Activated naive CD4-positive, alpha-beta T cell treated with anti-CD3 and anti-CD28 coated beads for 36 hours (primary cell): ENCODE measurements at regions of chr15 and their contacts with region 1.

Region 1: GRCh38 chr15:99565299-99566156 is at the start of gene MEF2A:
- DNase-seq: peak; percentile 95
- H3K4me3 Mint-ChIP-seq: peak within 1 kb of the TSS; percentile 99
- H3K27ac Mint-ChIP-seq: peak within 1 kb of the TSS; percentile 94
- H3K4me1 Mint-ChIP-seq: peaks cover 24% of the 10 kb centered on the region
- H3K27me3 Mint-ChIP-seq: no peaks in the 10 kb centered on the region
- total RNA-seq, gene MEF2A: 15.3 to 15.5 TPM

Region 2: GRCh38 chr15:99250494-99251435 is 314.8 kb before region 1 on chr15:
- CTCF ChIA-PET with region 1: interaction called, 3 read pairs
- intact Hi-C with region 1: loop called (anchors 1 kb)
- DNase-seq: peak; percentile 99
- H3K4me3 Mint-ChIP-seq: peak overlapping the region; percentile 93
- H3K27ac Mint-ChIP-seq: peak overlapping the region; percentile 87
- H3K4me1 Mint-ChIP-seq: peaks cover 28% of the 10 kb centered on the region
- H3K27me3 Mint-ChIP-seq: no peaks in the 10 kb centered on the region

Region 3: GRCh38 chr15:99442252-99442897 is 123.2 kb before region 1 on chr15:
- CTCF ChIA-PET with region 1: no interaction called
- intact Hi-C with region 1: loop called (anchors 5 kb)
- DNase-seq: no peak
- H3K4me3 Mint-ChIP-seq: no peak overlapping the region
- H3K27ac Mint-ChIP-seq: no peak overlapping the region
- H3K4me1 Mint-ChIP-seq: peaks cover 57% of the 10 kb centered on the region
- H3K27me3 Mint-ChIP-seq: no peaks in the 10 kb centered on the region

Region 4: GRCh38 chr15:99476413-99477222 is 88.9 kb before region 1 on chr15:
- CTCF ChIA-PET with region 1: no interaction called
- intact Hi-C with region 1: no loop called
- DNase-seq: peak; percentile 56
- H3K4me3 Mint-ChIP-seq: no peak overlapping the region
- H3K27ac Mint-ChIP-seq: no peak overlapping the region
- H3K4me1 Mint-ChIP-seq: peaks cover 25% of the 10 kb centered on the region
- H3K27me3 Mint-ChIP-seq: no peaks in the 10 kb centered on the region

Region 5: GRCh38 chr15:99536422-99537040 is 29.0 kb before region 1 on chr15:
- CTCF ChIA-PET with region 1: no interaction called
- intact Hi-C with region 1: no loop called
- DNase-seq: no peak
- H3K4me3 Mint-ChIP-seq: no peak overlapping the region
- H3K27ac Mint-ChIP-seq: no peak overlapping the region
- H3K4me1 Mint-ChIP-seq: no peaks in the 10 kb centered on the region
- H3K27me3 Mint-ChIP-seq: no peaks in the 10 kb centered on the region

Region 6: GRCh38 chr15:99613887-99614647 is 48.5 kb after region 1 on chr15:
- CTCF ChIA-PET with region 1: no interaction called
- intact Hi-C with region 1: loop called (anchors 1 kb)
- DNase-seq: no peak
- H3K4me3 Mint-ChIP-seq: no peak overlapping the region
- H3K27ac Mint-ChIP-seq: peak overlapping the region; percentile 21
- H3K4me1 Mint-ChIP-seq: peaks cover 56% of the 10 kb centered on the region
- H3K27me3 Mint-ChIP-seq: no peaks in the 10 kb centered on the region

Region 7: GRCh38 chr15:99733268-99734039 is 167.9 kb after region 1 on chr15 and contains the start of gene LYSMD4:
- CTCF ChIA-PET with region 1: no interaction called
- intact Hi-C with region 1: loop called (anchors 2 kb)
- DNase-seq: peak; percentile 99
- H3K4me3 Mint-ChIP-seq: peak within 1 kb of the TSS; percentile 81
- H3K27ac Mint-ChIP-seq: peak within 1 kb of the TSS; percentile 86
- H3K4me1 Mint-ChIP-seq: peaks cover 22% of the 10 kb centered on the region
- H3K27me3 Mint-ChIP-seq: no peaks in the 10 kb centered on the region
- total RNA-seq, gene LYSMD4: 4.9 TPM